IMR-90 (cell line): ENCODE measurements at regions of chr20 and their contacts with region 1.

Region 1: DNA sequence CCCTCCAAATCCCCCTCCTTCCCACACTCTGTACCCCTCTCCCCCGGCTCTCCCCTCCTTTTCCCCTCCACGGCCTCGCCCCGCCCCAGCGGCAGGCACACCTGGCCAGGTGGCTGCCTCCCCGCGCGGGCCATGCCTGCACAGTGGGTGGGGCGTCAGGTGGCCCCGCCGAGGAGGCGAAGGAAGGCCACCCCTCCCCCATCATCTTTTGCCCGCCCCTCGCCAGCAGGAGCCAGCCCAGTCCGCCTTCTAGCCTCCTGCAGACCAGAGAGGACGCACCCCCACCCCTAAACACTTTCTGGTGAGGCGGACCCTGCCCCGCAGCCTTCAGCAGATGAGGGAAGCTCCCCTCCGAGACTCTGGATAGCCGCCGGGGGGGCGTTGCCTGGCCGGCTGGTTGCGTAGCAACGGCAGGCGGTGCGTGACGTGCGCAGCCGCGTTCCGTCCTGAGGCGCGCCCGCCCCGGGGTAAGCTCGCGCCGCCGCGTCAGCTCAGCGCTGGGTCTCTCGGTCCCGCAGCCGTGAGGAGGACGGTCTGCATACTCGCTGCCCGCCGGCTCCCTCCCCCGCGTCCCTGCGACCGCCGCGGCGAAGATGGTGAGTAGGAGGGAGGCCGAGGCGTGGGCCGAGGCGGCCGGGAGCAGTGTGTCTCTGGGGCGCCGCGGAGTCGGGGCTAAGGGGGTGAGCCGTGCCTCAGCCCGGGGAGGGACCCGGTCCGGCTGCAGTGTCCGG is at the start of gene DSTN:
- DNase-seq: peak; percentile 95
- ATAC-seq: peak; percentile 78
- H3K4me3 ChIP-seq: peak within 1 kb of the TSS; percentile 85
- H3K27ac ChIP-seq: peak within 1 kb of the TSS; percentile 98
- H3K4me1 ChIP-seq: peaks cover 9% of the 10 kb centered on the region
- H3K27me3 ChIP-seq: no peaks in the 10 kb centered on the region
- CTCF ChIP-seq: no peak
- POLR2A ChIP-seq: peak; percentile 96
- RAD21 ChIP-seq: no peak
- total RNA-seq, gene DSTN: 221 and 383 TPM in 2 replicates

Region 2: GRCh38 chr20:16147216-16147615 is 1422.6 kb before region 1 on chr20:
- CTCF ChIA-PET with region 1: no interaction called
- POLR2A ChIA-PET with region 1: no interaction called
- dilution Hi-C with region 1: no loop called
- in situ Hi-C with region 1: no loop called
- intact Hi-C with region 1: no loop called
- DNase-seq: no peak
- ATAC-seq: no peak
- H3K4me3 ChIP-seq: no peak overlapping the region
- H3K27ac ChIP-seq: no peak overlapping the region
- H3K4me1 ChIP-seq: no peaks in the 10 kb centered on the region
- H3K27me3 ChIP-seq: no peaks in the 10 kb centered on the region
- CTCF ChIP-seq: no peak
- POLR2A ChIP-seq: no peak
- RAD21 ChIP-seq: no peak

Region 3: GRCh38 chr20:17542993-17543412 is 26.8 kb before region 1 on chr20:
- CTCF ChIA-PET with region 1: interaction called, 11 read pairs
- POLR2A ChIA-PET with region 1: interaction called, 4 read pairs
- dilution Hi-C with region 1: no loop called
- in situ Hi-C with region 1: loop called (anchors 5 kb)
- intact Hi-C with region 1: loop called (anchors 1 kb)
- DNase-seq: peak; percentile 83
- ATAC-seq: peak; percentile 69
- H3K4me3 ChIP-seq: no peak overlapping the region
- H3K27ac ChIP-seq: peak overlapping the region; percentile 82; the same call in 1 of the 2 replicates
- H3K4me1 ChIP-seq: peaks cover 7% of the 10 kb centered on the region
- H3K27me3 ChIP-seq: peaks cover 4% of the 10 kb centered on the region
- CTCF ChIP-seq: no peak
- POLR2A ChIP-seq: no peak
- RAD21 ChIP-seq: no peak

Region 4: DNA sequence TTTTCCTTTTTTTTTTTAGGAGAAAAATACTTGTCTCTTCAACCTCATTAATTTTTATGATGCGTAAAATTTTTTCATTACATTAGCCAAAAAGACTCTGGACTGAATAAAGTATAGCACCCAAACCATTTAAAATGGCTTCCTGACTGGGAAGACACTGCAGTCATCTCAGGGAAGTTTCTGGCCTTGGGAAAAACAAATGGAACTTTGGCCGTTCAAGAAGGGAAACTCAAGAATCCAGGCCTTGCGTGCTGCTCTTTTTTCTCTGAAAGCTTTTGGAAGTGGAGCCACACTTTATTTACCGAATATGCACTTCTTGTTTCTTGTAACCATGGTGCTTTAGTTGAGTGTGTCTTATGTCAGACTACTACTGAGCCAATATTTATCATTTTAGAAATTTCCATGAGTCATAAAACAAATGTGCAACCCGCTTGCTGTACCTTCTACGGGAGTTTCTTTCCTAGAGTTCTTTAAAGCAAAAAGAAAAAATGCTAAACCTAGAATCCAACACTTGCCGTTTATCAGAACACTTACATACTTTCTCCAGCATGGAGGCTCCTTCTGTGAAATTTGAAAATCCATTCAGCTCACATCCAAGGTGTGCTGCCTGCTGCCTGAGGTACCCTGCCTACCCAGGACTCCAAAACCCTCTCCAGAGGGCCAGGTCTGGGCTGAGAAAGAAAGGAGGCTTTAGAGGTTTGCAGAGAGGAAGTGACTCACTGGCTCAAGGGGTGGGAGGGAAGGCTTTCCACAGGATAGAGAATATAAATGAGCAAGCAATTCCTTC is 11.4 kb before region 1 on chr20:
- CTCF ChIA-PET with region 1: interaction called, 6 read pairs
- POLR2A ChIA-PET with region 1: interaction called, 5 read pairs
- dilution Hi-C with region 1: no loop called
- in situ Hi-C with region 1: no loop called
- intact Hi-C with region 1: loop called (anchors 1 kb)
- DNase-seq: peak; percentile 91
- ATAC-seq: peak; percentile 80
- H3K4me3 ChIP-seq: peak overlapping the region; percentile 34; the same call in 1 of the 2 replicates
- H3K27ac ChIP-seq: peak overlapping the region; percentile 78
- H3K4me1 ChIP-seq: peaks cover 17% of the 10 kb centered on the region
- H3K27me3 ChIP-seq: no peaks in the 10 kb centered on the region
- CTCF ChIP-seq: no peak
- POLR2A ChIP-seq: peak; percentile 91
- RAD21 ChIP-seq: no peak; the same call in 1 of the 2 replicates

Region 5: GRCh38 chr20:17594443-17594842 is 24.7 kb after region 1 on chr20:
- CTCF ChIA-PET with region 1: interaction called, 7 read pairs
- POLR2A ChIA-PET with region 1: interaction called, 5 read pairs
- dilution Hi-C with region 1: no loop called
- in situ Hi-C with region 1: no loop called
- intact Hi-C with region 1: loop called (anchors 2 kb)
- DNase-seq: peak; percentile 87
- ATAC-seq: peak; percentile 91
- H3K4me3 ChIP-seq: no peak overlapping the region
- H3K27ac ChIP-seq: no peak overlapping the region
- H3K4me1 ChIP-seq: peaks cover 17% of the 10 kb centered on the region
- H3K27me3 ChIP-seq: no peaks in the 10 kb centered on the region
- CTCF ChIP-seq: no peak
- POLR2A ChIP-seq: no peak
- RAD21 ChIP-seq: peak; percentile 12; the same call in 1 of the 2 replicates

Region 6: DNA sequence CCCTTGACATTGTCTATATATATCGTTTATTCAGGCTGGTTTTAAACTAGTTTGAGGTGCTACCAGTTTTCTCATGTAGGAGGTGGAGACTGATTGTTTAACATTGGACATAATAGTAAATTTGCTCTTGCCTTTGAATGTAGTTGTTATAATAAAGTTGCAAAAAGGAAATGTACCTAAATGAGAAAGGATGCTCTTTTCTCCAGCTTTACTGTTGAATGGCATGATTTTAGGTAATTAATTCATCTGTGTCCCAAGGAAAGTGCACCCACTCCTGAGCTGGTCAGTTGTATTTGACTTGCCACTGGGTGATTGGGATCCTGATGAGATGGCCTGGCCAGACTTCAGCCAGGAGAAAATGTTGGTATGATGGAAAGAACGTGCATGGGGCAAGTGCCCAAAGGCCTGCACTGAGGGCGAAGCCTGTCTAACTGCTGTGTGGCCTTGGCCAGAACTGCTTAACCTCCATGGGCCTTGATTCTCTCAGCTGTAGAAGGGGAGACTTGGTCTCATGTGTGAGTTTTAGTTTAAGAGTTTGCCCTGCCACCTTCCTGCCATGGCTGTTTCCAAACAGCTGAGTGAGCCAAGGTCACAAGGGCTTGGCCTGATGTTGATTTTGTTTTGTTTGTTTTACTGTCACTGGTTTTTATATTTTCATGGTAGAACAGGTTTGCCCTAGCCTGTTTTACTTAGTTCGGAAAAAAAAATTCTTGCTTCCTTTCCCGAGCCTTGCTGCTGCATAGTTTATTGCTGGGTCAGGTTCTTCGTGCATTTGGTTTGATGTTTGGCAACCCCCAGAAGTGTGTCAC is 35.3 kb after region 1 on chr20:
- CTCF ChIA-PET with region 1: interaction called, 5 read pairs
- POLR2A ChIA-PET with region 1: no interaction called
- dilution Hi-C with region 1: no loop called
- in situ Hi-C with region 1: no loop called
- intact Hi-C with region 1: loop called (anchors 5 kb)
- DNase-seq: no peak
- ATAC-seq: no peak
- H3K4me3 ChIP-seq: no peak overlapping the region
- H3K27ac ChIP-seq: no peak overlapping the region
- H3K4me1 ChIP-seq: peaks cover 4% of the 10 kb centered on the region; the same call in 1 of the 2 replicates
- H3K27me3 ChIP-seq: no peaks in the 10 kb centered on the region
- CTCF ChIP-seq: no peak
- POLR2A ChIP-seq: 0 out of 2 replicates have a peak, but pooled peaks have one; percentile 22
- RAD21 ChIP-seq: no peak

Region 7: DNA sequence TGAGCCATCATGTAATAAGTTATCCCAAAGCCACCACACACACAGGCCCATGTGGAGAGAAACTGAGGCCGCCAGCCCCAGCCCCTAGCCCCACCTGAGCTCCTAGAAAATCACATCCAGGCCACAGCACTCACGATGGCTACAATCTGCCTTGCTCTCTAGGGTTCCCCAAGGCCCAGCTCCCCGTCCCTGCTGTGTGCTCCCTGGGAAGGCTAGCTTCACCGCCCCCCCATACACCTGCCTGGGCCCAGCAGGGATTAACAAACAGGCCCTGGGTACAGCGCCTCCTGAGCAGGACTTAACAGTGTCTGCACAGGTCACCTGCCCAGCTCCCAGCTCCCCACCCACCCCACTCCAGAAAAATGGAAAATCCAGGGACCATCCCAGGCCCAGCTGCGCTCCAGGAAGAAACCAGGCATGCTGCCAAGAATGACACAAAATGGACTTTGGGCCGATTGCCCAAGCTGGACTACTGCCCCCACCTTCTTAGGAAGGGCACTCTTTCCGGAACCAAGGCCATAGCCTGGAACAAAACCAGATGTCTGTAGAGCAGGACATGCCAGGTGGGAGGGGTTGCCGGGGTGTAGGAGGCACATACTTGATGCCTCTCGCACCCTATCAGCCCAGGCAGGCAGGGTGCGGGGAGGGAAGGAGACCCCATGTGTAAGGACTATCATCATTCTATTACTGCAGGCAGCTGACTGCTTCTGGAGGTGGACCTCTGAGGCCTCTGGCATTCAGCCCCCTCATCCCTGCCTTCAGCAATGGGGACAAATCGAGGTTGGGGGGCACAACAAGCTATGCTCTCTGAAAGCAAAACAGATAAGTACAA is 293.9 kb after region 1 on chr20:
- CTCF ChIA-PET with region 1: no interaction called
- POLR2A ChIA-PET with region 1: interaction called, 19 read pairs
- dilution Hi-C with region 1: no loop called
- in situ Hi-C with region 1: no loop called
- intact Hi-C with region 1: no loop called
- DNase-seq: peak; percentile 52
- ATAC-seq: peak; percentile 29; the same call in 1 of the 2 replicates
- H3K4me3 ChIP-seq: no peak overlapping the region
- H3K27ac ChIP-seq: no peak overlapping the region
- H3K4me1 ChIP-seq: peaks cover 2% of the 10 kb centered on the region; the same call in 1 of the 2 replicates
- H3K27me3 ChIP-seq: peaks cover 3% of the 10 kb centered on the region
- CTCF ChIP-seq: no peak
- POLR2A ChIP-seq: no peak
- RAD21 ChIP-seq: no peak